HCT116 (cell line): ENCODE measurements at regions of chr6 and their contacts with region 1.

Region 1: GRCh38 chr6:136792410-136793262 is at the start of gene MAP3K5:
- DNase-seq: peak; percentile 77
- ATAC-seq: peak; percentile 87
- H3K4me3 ChIP-seq: peak within 1 kb of the TSS; percentile 72 to 88
- H3K27ac ChIP-seq: peak within 1 kb of the TSS; percentile 88
- H3K4me1 ChIP-seq: peaks cover 21 to 37% of the 10 kb centered on the region in 2 experiments
- H3K27me3 ChIP-seq: no peaks in the 10 kb centered on the region
- CTCF ChIP-seq: peak; percentile 78 to 92 (median 83)
- POLR2A ChIP-seq: peak; percentile 48
- RAD21 ChIP-seq: peak; percentile 93
- total RNA-seq, gene MAP3K5: 11.8 TPM

Region 2: GRCh38 chr6:136582711-136583471 is 209.7 kb before region 1 on chr6:
- CTCF ChIA-PET with region 1: interaction called, 6 read pairs
- POLR2A ChIA-PET with region 1: no interaction called
- RAD21 ChIA-PET with region 1: no interaction called
- intact Hi-C with region 1: loop called (anchors 1 kb)
- DNase-seq: peak; percentile 22
- ATAC-seq: peak; percentile 62; the same call in 1 of the 2 replicates
- H3K4me3 ChIP-seq: no peak overlapping the region
- H3K27ac ChIP-seq: no peak overlapping the region
- H3K4me1 ChIP-seq: no peaks in the 10 kb centered on the region
- H3K27me3 ChIP-seq: no peaks in the 10 kb centered on the region
- CTCF ChIP-seq: peak; percentile 50 to 71 (median 66); a peak in 5 of 6 replicates
- POLR2A ChIP-seq: no peak
- RAD21 ChIP-seq: peak; percentile 69

Region 3: DNA sequence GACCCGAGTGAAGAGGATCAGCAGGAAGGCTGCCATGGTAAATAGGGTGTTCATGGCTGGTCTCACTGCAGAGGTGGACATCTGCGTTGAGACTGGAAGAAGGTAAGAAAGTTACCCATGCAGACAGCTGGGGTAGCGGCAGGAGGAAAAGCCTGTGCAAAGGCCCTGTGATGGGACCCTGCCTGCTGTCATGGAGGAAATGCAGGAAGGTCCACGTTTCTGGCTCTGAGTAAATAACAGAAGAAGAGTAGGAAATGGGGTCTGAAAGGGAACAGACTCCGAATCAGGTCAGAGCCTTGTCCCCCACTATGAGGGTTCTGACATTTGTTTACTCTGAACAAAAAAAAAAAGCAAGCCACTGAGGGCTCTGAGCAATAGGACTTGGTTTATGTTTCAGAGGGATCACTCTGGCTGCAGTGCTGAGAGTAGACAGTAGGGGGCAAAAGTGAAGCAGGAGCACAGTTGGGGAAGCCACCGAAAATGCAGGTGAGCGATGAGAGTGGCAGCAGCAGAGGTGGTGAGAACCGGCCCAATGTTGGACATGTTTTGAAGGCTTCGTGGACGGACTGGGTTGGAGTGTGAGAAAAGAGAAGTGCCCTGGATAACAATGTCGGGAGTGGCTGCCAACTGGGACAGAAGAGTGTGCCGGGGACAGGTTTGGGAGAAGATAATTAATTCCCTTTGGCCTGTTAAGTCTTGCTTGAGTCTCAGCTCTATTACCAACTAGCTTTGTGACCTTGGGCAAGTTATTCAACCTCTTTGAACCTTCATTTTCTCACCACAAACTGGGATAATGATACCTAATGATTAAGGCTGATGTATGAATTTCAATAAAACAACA is 184.5 kb before region 1 on chr6:
- CTCF ChIA-PET with region 1: interaction called, 32 read pairs
- POLR2A ChIA-PET with region 1: interaction called, 3 read pairs
- RAD21 ChIA-PET with region 1: interaction called in 1 of 2 experiments, 5 read pairs
- intact Hi-C with region 1: loop called (anchors 1 kb)
- DNase-seq: peak; percentile 75
- ATAC-seq: peak; percentile 72
- H3K4me3 ChIP-seq: 0 out of 4 replicates have a peak overlapping the region, but pooled peaks of 1 of the 2 experiments have one; percentile 6
- H3K27ac ChIP-seq: peak overlapping the region; percentile 83; the same call in 1 of the 2 replicates
- H3K4me1 ChIP-seq: peaks cover 56 to 69% of the 10 kb centered on the region in 2 experiments
- H3K27me3 ChIP-seq: no peaks in the 10 kb centered on the region
- CTCF ChIP-seq: peak; percentile 73 to 90 (median 84)
- POLR2A ChIP-seq: no peak
- RAD21 ChIP-seq: peak; percentile 75

Region 4: DNA sequence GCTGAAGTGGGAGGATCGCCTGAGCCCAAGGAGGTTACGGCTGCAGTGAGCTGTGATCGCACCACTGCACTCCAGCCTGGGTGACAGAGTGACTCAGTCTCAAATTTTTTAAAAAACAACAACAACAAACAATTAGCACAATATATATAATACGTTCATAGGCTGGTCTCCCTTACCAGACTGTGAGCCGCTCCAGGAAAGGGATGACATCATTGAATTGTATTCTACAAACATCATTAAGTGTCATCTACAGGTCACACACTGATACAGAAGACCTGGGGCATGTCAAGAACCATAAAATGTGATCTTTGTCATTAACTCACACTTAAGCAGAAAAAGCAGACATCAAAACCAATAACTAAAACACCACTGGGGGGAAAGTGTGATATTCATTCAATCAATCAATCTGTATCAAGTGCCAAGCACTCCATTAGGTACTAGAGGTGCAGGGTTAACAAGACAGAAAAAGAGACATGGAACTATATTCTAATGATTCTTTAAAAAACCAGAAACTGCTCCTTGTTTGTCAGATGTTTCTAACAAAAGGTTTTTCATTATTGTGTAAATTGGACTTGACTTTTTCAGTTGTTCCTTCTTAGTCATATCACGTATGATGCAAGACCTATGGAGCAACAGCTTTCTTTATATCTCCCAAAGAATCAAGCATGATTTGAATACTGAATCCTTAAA is 18.1 kb before region 1 on chr6:
- CTCF ChIA-PET with region 1: interaction called, 10 read pairs
- POLR2A ChIA-PET with region 1: interaction called, 4 read pairs
- RAD21 ChIA-PET with region 1: no interaction called
- intact Hi-C with region 1: no loop called
- DNase-seq: no peak
- ATAC-seq: no peak
- H3K4me3 ChIP-seq: no peak overlapping the region
- H3K27ac ChIP-seq: no peak overlapping the region
- H3K4me1 ChIP-seq: peaks cover 16 to 24% of the 10 kb centered on the region in 2 experiments
- H3K27me3 ChIP-seq: no peaks in the 10 kb centered on the region
- CTCF ChIP-seq: no peak
- POLR2A ChIP-seq: no peak
- RAD21 ChIP-seq: no peak

Region 5: GRCh38 chr6:136846046-136846445 is 53.4 kb after region 1 on chr6:
- CTCF ChIA-PET with region 1: no interaction called
- POLR2A ChIA-PET with region 1: no interaction called
- RAD21 ChIA-PET with region 1: no interaction called
- intact Hi-C with region 1: no loop called
- DNase-seq: peak; percentile 47
- ATAC-seq: peak; percentile 63
- H3K4me3 ChIP-seq: no peak overlapping the region
- H3K27ac ChIP-seq: no peak overlapping the region
- H3K4me1 ChIP-seq: no peaks in the 10 kb centered on the region
- H3K27me3 ChIP-seq: no peaks in the 10 kb centered on the region
- CTCF ChIP-seq: peak; percentile 40 to 71 (median 68); a peak in 5 of 6 replicates
- POLR2A ChIP-seq: no peak
- RAD21 ChIP-seq: peak; percentile 63